Heart right ventricle (tissue), 16 donors: ENCODE measurements at regions of chr2 and their contacts with region 1.

Region 1: DNA sequence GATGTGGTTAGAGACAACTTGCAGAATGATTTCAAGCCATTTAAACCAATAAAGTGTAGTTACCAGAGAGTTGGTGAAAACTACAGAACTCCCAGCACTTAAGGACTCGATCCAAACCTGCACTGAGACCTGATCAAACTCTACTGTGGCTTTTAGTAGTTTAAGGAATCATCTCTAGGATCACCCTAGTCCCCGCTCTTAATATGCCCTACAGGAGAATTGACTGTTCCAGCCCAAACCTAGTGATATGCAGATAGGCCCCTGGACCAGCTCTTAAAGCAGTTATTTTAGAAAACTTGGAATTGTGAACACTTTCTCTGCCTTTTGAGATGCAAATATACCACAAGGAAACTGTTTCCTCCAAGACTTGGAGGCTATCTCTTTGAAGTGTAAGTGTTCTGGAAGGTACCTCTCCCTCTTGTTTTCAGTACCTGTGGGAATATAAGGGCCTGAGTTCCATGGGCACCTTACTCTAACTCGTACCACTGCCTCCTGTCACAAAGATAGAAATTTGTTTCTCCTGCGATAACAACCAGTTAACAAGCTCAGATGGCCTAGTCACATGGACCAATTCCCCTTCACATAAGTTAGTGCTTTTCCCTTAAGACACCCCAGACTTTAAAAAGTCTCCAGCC is 1367.2 kb upstream of the SLC39A10 start:
- DNase-seq: no peak
- ATAC-seq: no peak
- H3K4me3 ChIP-seq: no peak overlapping the region
- H3K27ac ChIP-seq: no peak overlapping the region
- H3K4me1 ChIP-seq: no peaks in the 10 kb centered on the region
- H3K27me3 ChIP-seq: no peaks in the 10 kb centered on the region
- CTCF ChIP-seq: no peak

Region 2: DNA sequence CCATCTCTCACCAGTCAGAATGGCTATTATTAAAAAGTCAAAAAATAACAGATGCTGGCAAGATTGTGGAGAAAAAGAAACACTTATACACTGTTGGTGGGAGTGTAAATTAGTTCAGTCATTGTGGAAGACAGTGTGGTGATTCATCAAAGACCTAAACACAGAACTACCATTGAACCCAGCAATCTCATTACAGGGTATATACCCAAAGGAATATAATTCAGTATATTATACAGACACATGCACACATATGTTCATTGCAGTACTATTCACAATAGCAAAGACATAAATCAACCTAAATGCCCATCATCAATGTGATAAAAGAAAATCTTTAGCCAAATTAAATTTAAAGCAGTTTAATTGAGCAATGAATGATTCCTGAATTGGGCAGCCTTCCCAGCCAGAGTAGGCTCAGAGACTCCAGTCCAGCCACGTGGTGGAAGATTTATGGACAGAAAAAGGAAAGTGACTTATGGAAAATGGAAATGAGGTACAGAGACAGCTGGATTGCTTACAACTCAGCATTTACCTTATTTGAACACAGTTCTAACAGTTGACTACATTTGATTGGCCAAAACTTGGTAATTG is 990.1 kb after region 1 on chr2:
- intact Hi-C with region 1: loop called in 1 of 10 experiments (anchors 5 kb)
- DNase-seq: no peak
- ATAC-seq: no peak
- H3K4me3 ChIP-seq: no peak overlapping the region
- H3K27ac ChIP-seq: no peak overlapping the region
- H3K4me1 ChIP-seq: no peaks in the 10 kb centered on the region
- H3K27me3 ChIP-seq: no peaks in the 10 kb centered on the region
- CTCF ChIP-seq: no peak